Activated T-helper 1 cell treated with anti-CD3 and anti-CD28 coated beads, Interleukin-12 subunit alpha, Interleukin-12 subunit beta, Interleukin-2, Interleukin-4 antibody, amounts not matched to agents 30 ng/mL and 10 ng/mL and 1 ng/mL, durations not matched to agents 14 hours and 24 hours and 36 hours (primary cell): ENCODE measurements at regions of chr2 and their contacts with region 1.

Region 1: DNA sequence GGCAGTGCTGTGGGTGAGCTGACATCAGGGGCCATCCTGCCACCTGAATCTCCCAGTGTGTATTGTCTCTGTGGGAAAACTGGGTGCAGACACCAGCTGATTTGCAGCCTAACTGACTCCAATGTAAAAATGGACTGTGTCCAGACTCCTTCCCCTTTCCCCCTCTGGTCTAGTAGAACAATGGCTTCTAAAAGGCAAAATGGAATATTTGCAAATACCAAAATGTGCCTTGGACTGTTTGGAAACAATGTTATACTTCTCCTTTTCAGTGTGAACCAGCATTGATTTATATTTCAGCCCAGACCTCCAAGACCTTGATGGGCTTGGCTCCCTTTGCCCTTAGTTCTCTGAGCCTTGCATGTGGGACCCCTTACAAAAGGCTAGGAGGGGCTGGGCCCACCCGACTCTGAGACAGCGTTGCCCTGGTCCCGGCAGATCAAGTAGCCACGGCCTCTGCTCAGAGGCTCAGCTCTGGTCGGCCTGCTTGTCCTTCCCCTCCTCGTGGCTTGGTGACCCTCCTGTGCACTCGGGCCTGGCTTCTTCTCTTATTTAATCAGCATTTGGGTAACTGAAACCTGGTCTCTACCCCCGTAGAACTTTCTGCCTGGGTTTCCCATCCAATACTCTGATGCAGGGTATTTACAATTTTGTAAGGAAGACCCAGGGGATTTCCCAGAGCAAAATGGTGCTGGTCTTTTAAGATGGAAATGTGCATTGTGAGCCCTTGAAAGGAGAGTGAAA is 18.0 kb upstream of the ACKR3 start:
- DNase-seq: no peak
- H3K4me3 Mint-ChIP-seq: peak overlapping the region; percentile 15
- H3K27ac Mint-ChIP-seq: peak overlapping the region; percentile 36
- H3K4me1 Mint-ChIP-seq: peaks cover 74% of the 10 kb centered on the region
- H3K27me3 Mint-ChIP-seq: no peaks in the 10 kb centered on the region

Region 2: GRCh38 chr2:236273126-236273525 is 278.5 kb before region 1 on chr2:
- intact Hi-C with region 1: no loop called
- DNase-seq: no peak
- H3K4me3 Mint-ChIP-seq: no peak overlapping the region
- H3K27ac Mint-ChIP-seq: no peak overlapping the region
- H3K4me1 Mint-ChIP-seq: no peaks in the 10 kb centered on the region
- H3K27me3 Mint-ChIP-seq: peaks cover under 1% of the 10 kb centered on the region

Region 3: GRCh38 chr2:236536727-236537398 is 14.8 kb before region 1 on chr2:
- intact Hi-C with region 1: loop called (anchors 1 kb)
- DNase-seq: peak; percentile 45
- H3K4me3 Mint-ChIP-seq: peak overlapping the region; percentile 92
- H3K27ac Mint-ChIP-seq: peak overlapping the region; percentile 93
- H3K4me1 Mint-ChIP-seq: peaks cover 63% of the 10 kb centered on the region
- H3K27me3 Mint-ChIP-seq: no peaks in the 10 kb centered on the region